PC-9 (cell line): ENCODE measurements at regions of chr22 and their contacts with region 1.

Region 1: GRCh38 chr22:44773082-44773481 is 20.7 kb downstream of the ARHGAP8 start:
- DNase-seq: no peak
- H3K4me3 ChIP-seq: no peak overlapping the region
- H3K27ac ChIP-seq: no peak overlapping the region
- H3K4me1 ChIP-seq: no peaks in the 10 kb centered on the region
- H3K27me3 ChIP-seq: no peaks in the 10 kb centered on the region
- CTCF ChIP-seq: no peak

Region 2: GRCh38 chr22:44758346-44758973 is 14.6 kb before region 1 on chr22:
- CTCF ChIA-PET with region 1: no interaction called
- POLR2A ChIA-PET with region 1: interaction called, 37 read pairs
- intact Hi-C with region 1: no loop called
- DNase-seq: peak in 1 of 2 experiments; percentile 49
- H3K4me3 ChIP-seq: no peak overlapping the region
- H3K27ac ChIP-seq: no peak overlapping the region
- H3K4me1 ChIP-seq: peaks cover 47% of the 10 kb centered on the region
- H3K27me3 ChIP-seq: no peaks in the 10 kb centered on the region
- CTCF ChIP-seq: no peak

Region 3: GRCh38 chr22:44796972-44797725 is 24.1 kb after region 1 on chr22:
- CTCF ChIA-PET with region 1: no interaction called
- POLR2A ChIA-PET with region 1: no interaction called
- intact Hi-C with region 1: no loop called
- DNase-seq: no peak
- H3K4me3 ChIP-seq: no peak overlapping the region
- H3K27ac ChIP-seq: no peak overlapping the region
- H3K4me1 ChIP-seq: no peaks in the 10 kb centered on the region
- H3K27me3 ChIP-seq: no peaks in the 10 kb centered on the region
- CTCF ChIP-seq: no peak